ENCODE measurements at regions of chr2 and their contacts with region 1.

Region 1: GRCh38 chr2:150624001-150624401 is 136.5 kb upstream of the RND3 start:
- DNase-seq: peak; percentile 50
- ATAC-seq: no peak
- H3K4me3 ChIP-seq: no peak overlapping the region
- H3K27ac ChIP-seq: peak overlapping the region; percentile 11; the same call in 1 of the 2 replicates
- H3K4me1 ChIP-seq: peaks cover 48% of the 10 kb centered on the region
- H3K27me3 ChIP-seq: no peaks in the 10 kb centered on the region
- CTCF ChIP-seq: no peak

Region 2: GRCh38 chr2:150188177-150188576 is 435.8 kb before region 1 on chr2:
- CTCF ChIA-PET with region 1: no interaction called
- POLR2A ChIA-PET with region 1: no interaction called
- intact Hi-C with region 1: loop called (anchors 2 kb)
- DNase-seq: peak; percentile 93
- ATAC-seq: peak; percentile 91
- H3K4me3 ChIP-seq: peak overlapping the region; percentile 26; the same call in 1 of the 2 replicates
- H3K27ac ChIP-seq: peak overlapping the region; percentile 79
- H3K4me1 ChIP-seq: peaks cover 23% of the 10 kb centered on the region
- H3K27me3 ChIP-seq: no peaks in the 10 kb centered on the region
- CTCF ChIP-seq: peak; percentile 43

Region 3: DNA sequence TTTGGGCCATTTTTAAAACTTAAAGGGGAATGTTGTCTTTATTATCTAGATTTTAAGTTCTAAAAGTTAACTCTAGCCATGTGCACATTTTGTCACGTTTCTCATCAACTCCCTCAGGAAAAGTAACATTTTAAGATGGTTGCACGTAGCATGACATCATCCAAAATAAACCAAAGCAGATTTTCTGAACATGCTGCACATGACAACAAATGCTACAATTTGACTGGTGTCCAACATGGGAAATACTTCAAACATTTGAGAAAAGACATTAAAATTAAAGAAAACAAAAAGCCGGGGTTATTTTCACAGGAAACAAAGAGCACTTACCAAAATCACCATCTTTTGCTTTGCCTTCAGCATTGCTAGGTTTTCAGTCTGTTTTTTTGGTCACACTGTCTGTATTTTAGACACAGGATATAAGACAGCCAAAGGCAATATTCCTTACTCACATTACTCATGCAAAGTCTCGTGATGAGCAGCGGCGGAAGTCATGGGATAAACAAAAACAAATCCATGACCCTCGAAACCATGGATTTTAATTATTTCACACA is 85.3 kb before region 1 on chr2:
- CTCF ChIA-PET with region 1: no interaction called
- POLR2A ChIA-PET with region 1: no interaction called
- intact Hi-C with region 1: no loop called
- DNase-seq: no peak
- ATAC-seq: no peak
- H3K4me3 ChIP-seq: no peak overlapping the region
- H3K27ac ChIP-seq: no peak overlapping the region
- H3K4me1 ChIP-seq: no peaks in the 10 kb centered on the region
- H3K27me3 ChIP-seq: no peaks in the 10 kb centered on the region
- CTCF ChIP-seq: no peak

Region 4: DNA sequence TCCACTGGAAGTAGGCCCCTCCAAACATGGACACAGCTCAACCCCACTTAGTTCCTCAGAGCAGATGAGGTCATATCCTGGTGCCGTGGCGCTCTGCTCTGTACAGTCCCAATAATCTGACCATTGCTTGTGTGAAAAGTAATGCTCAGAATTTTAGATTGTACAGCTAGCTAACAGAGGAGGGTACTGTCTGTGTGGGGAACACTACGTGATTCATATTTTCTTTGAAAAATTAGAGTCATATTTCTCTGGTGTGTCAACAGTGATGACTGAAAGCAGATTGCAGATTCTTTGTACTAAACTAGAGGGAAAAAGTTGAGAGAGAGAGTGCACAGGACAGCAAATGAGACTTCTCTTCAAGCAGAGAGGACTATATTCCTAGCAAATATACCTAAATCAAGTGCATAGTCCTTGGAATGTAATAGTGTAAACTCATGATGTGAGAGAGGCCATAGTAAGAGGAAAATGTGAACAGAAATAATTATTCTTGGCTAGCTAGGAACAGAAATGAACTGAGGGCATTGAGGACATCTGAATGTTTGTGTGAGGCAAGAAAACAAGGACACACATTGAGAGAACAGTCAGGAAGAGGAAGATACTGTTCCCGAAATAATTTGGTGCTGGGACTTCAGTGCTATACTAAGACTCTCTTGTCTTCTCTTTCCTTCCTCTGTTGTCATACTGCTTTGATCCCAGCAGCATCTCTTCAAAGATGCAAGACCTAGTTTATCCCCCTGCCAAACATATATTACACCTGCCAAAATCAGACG is 20.5 kb after region 1 on chr2:
- CTCF ChIA-PET with region 1: no interaction called
- POLR2A ChIA-PET with region 1: no interaction called
- intact Hi-C with region 1: loop called (anchors 1 kb)
- DNase-seq: peak; percentile 92
- ATAC-seq: peak; percentile 99
- H3K4me3 ChIP-seq: 0 out of 2 replicates have a peak overlapping the region, but pooled peaks have one; percentile 7
- H3K27ac ChIP-seq: peak overlapping the region; percentile 83
- H3K4me1 ChIP-seq: peaks cover 42% of the 10 kb centered on the region
- H3K27me3 ChIP-seq: no peaks in the 10 kb centered on the region
- CTCF ChIP-seq: no peak

Region 5: DNA sequence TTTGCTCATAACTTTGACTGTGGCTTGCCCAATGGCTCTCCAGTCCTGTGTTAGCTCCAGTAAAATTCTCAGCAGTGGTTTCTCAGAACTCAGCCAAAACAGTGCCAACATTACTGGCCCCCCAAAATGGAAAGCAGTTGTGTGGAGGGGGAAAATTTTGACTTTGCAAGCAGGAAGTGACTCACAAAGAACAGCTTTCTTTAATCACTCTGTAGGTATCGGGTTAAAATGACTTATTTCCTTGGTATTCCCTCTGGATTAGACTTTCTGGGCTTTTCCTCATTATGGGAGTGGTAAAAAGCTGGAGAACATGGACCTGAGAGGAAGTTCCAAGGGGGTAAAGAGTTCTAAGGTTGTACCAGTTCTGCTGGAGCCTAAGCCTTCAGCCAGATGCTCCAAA is 39.1 kb after region 1 on chr2:
- CTCF ChIA-PET with region 1: no interaction called
- POLR2A ChIA-PET with region 1: no interaction called
- intact Hi-C with region 1: no loop called
- DNase-seq: peak; percentile 63
- ATAC-seq: peak; percentile 75
- H3K4me3 ChIP-seq: no peak overlapping the region
- H3K27ac ChIP-seq: peak overlapping the region; percentile 57
- H3K4me1 ChIP-seq: peaks cover 12% of the 10 kb centered on the region
- H3K27me3 ChIP-seq: no peaks in the 10 kb centered on the region
- CTCF ChIP-seq: no peak

Region 6: DNA sequence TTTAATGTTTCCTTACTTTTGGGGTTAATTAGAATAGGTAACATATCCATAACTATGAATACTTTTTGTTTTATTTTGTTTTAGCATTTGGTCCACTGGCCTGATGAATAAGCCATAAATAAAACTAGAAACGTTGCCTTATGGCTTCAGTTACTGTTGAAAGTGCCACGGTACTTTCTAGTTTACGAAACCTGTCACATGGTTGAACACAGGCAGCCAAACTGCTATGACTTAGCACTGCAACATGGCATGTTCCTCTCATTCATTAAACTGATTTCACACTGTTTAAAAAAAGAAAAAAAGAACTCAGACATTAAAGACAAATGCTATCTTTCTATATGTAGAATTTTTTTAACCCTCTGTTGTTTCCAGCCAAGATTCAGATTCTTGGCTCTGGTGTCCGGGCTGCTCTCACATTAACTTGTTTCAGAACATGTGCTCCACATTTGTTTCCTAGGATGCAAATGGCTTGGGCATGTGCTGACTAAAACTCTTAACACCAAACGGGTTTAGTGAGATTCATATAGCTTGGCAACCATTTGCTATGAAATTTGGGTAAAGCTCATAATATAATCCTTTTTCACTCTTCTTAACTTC is 187.4 kb after region 1 on chr2:
- CTCF ChIA-PET with region 1: no interaction called
- POLR2A ChIA-PET with region 1: no interaction called
- intact Hi-C with region 1: loop called (anchors 1 kb)
- DNase-seq: peak; percentile 17
- ATAC-seq: no peak
- H3K4me3 ChIP-seq: no peak overlapping the region
- H3K27ac ChIP-seq: peak overlapping the region; percentile 88; the same call in 1 of the 2 replicates
- H3K4me1 ChIP-seq: peaks cover 20% of the 10 kb centered on the region
- H3K27me3 ChIP-seq: no peaks in the 10 kb centered on the region
- CTCF ChIP-seq: no peak

Region 7: DNA sequence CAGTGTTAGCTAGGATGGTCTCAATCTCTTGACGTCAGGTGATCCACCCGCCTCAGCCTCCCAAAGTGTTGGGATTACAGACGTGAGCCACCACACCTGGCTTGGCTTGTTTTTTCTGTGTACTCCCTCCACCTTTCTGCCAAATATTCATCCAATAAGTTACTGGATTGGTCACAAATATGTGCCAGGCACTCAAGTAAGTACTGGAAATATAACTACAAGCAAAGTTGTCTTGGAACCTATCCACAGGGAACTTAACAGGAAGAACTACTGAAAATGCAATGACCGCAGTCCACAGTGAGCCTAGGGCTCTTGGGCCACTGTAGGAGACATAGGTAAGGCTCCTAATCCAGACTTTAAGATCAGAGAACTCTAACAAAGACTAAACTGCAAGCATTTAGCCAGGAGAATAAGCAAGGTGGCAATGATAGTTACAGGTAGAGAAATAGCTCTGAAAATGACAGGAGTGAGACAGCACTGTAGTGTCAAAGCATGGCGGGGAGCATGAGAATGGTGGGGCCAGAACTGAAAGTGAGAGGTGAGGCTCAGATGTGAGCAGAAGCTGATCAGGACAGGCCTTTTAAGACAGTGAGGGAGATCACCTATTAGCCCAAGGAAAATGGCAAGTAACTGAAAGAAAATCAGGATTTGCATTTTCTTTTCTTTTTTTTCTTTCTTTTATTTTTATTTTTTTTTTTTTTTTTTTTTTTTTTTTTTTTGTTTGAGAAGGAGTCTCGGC is 385.6 kb after region 1 on chr2:
- CTCF ChIA-PET with region 1: no interaction called
- POLR2A ChIA-PET with region 1: no interaction called
- intact Hi-C with region 1: loop called (anchors 5 kb)
- DNase-seq: no peak
- ATAC-seq: no peak
- H3K4me3 ChIP-seq: no peak overlapping the region
- H3K27ac ChIP-seq: no peak overlapping the region
- H3K4me1 ChIP-seq: no peaks in the 10 kb centered on the region
- H3K27me3 ChIP-seq: no peaks in the 10 kb centered on the region
- CTCF ChIP-seq: no peak

Region 8: GRCh38 chr2:151161821-151162551 is 538.0 kb after region 1 on chr2:
- CTCF ChIA-PET with region 1: no interaction called
- POLR2A ChIA-PET with region 1: no interaction called
- intact Hi-C with region 1: loop called (anchors 10 kb)
- DNase-seq: peak; percentile 51
- ATAC-seq: peak; percentile 70
- H3K4me3 ChIP-seq: no peak overlapping the region
- H3K27ac ChIP-seq: no peak overlapping the region
- H3K4me1 ChIP-seq: no peaks in the 10 kb centered on the region
- H3K27me3 ChIP-seq: no peaks in the 10 kb centered on the region
- CTCF ChIP-seq: peak; percentile 60

Region 9: GRCh38 chr2:151277067-151277466 is 653.1 kb after region 1 on chr2:
- CTCF ChIA-PET with region 1: no interaction called
- POLR2A ChIA-PET with region 1: no interaction called
- intact Hi-C with region 1: no loop called
- DNase-seq: no peak
- ATAC-seq: no peak
- H3K4me3 ChIP-seq: no peak overlapping the region
- H3K27ac ChIP-seq: no peak overlapping the region
- H3K4me1 ChIP-seq: no peaks in the 10 kb centered on the region
- H3K27me3 ChIP-seq: no peaks in the 10 kb centered on the region
- CTCF ChIP-seq: no peak

Measured in PC-3 (cell line).